Caco-2 (cell line): ENCODE measurements at regions of chr2 and their contacts with region 1.

Region 1: GRCh38 chr2:75640621-75641121 is 5.9 kb upstream of the MRPL19 start:
- DNase-seq: peak; percentile 65 to 71
- H3K4me3 ChIP-seq: no peak overlapping the region
- H3K4me3 Mint-ChIP-seq: no peak overlapping the region
- H3K27ac Mint-ChIP-seq: no peak overlapping the region
- H3K4me1 ChIP-seq: no peaks in the 10 kb centered on the region
- H3K4me1 Mint-ChIP-seq: no peaks in the 10 kb centered on the region
- H3K27me3 ChIP-seq: no peaks in the 10 kb centered on the region
- H3K27me3 Mint-ChIP-seq: peaks cover 12% of the 10 kb centered on the region
- CTCF ChIP-seq: peak; percentile 91 to 99

Region 2: DNA sequence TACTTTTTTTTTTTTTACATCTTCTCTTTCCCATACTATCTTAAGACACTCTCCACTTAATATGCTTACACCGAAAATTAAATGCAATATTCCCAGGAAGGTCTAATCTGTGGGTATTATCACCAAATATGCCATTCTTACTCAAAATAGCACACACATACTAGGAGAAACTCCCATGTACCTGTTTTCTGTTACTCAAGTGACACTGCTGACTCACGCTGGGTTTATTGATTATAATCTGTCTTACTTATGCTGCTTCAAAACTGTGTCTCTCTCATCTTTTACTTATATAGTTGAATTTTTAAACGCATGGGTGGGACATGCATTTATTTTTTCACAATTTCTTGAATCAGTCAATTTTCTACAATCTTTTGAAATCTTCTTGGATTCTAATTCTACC is 35.8 kb after region 1 on chr2:
- CTCF ChIA-PET with region 1: interaction called, 9 read pairs
- POLR2A ChIA-PET with region 1: interaction called, 3 read pairs
- intact Hi-C with region 1: loop called (anchors 1 kb)
- DNase-seq: no peak
- H3K4me3 ChIP-seq: no peak overlapping the region
- H3K4me3 Mint-ChIP-seq: no peak overlapping the region
- H3K27ac Mint-ChIP-seq: no peak overlapping the region
- H3K4me1 ChIP-seq: no peaks in the 10 kb centered on the region
- H3K4me1 Mint-ChIP-seq: no peaks in the 10 kb centered on the region
- H3K27me3 ChIP-seq: no peaks in the 10 kb centered on the region
- H3K27me3 Mint-ChIP-seq: no peaks in the 10 kb centered on the region
- CTCF ChIP-seq: no peak

Region 3: GRCh38 chr2:75716406-75716805 is 75.7 kb after region 1 on chr2:
- CTCF ChIA-PET with region 1: no interaction called
- POLR2A ChIA-PET with region 1: no interaction called
- intact Hi-C with region 1: loop called (anchors 1 kb)
- DNase-seq: no peak
- H3K4me3 ChIP-seq: no peak overlapping the region
- H3K4me3 Mint-ChIP-seq: no peak overlapping the region
- H3K27ac Mint-ChIP-seq: no peak overlapping the region
- H3K4me1 ChIP-seq: no peaks in the 10 kb centered on the region
- H3K4me1 Mint-ChIP-seq: peaks cover 15% of the 10 kb centered on the region
- H3K27me3 ChIP-seq: no peaks in the 10 kb centered on the region
- H3K27me3 Mint-ChIP-seq: peaks cover 6% of the 10 kb centered on the region
- CTCF ChIP-seq: no peak